GM12878 (cell line): ENCODE measurements at regions of chr13 and their contacts with region 1.

Region 1: DNA sequence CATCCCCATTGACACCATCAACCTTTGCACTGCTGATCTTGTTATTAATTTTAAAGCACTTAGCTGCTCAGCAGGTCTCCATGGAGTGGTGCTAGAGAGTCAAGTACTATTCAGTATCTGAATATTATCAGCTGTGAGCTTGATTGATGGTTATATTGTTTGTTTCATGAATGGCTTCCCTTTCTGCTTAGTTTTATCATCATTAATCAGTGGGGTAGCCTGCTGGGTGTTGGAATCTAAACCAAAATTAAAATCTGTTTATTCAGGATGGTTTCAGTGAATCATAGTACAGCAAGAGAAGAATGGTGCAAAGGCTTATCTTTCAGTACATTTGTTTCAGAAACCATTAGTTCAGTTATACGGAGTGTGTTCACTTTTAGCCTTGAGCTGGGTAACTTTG is 42.5 kb upstream of the SCEL start:
- DNase-seq: no peak
- ATAC-seq: peak; percentile 95
- H3K4me3 ChIP-seq: no peak overlapping the region
- H3K27ac ChIP-seq: no peak overlapping the region
- H3K4me1 ChIP-seq: peaks cover 8% of the 10 kb centered on the region; the same call in 1 of the 2 replicates
- H3K27me3 ChIP-seq: no peaks in the 10 kb centered on the region
- CTCF ChIP-seq: peak; percentile 68 to 81 (median 75); a peak in 5 of 6 replicates
- EP300 ChIP-seq: no peak
- POLR2A ChIP-seq: no peak
- RAD21 ChIP-seq: peak; percentile 88

Region 2: DNA sequence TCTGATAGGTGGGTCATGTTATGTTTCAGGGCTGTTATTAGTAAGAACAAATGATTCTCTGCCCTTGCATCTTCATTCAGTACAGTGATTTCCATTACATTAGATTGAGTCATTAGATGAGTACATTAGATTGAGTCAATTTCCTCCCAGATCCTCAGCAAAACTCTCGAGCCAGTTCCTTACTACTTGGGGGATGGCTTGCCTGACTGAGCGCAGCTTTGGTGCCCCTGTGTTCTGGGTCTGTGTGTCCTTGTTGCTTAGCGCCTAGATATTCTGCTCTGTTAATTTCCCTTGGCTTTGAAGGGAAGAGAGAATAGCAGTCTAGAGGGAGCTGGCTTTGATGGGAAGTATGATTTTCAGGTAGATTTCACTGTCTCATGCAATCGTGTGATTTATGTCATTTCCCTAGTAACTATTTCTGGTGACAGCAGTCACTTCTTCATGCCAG is 23.4 kb after region 1 on chr13:
- CTCF ChIA-PET with region 1: interaction called, 10 read pairs
- POLR2A ChIA-PET with region 1: interaction called, 4 read pairs
- RAD21 ChIA-PET with region 1: interaction called, 7 read pairs
- SMC1A ChIA-PET with region 1: interaction called, 9 read pairs
- in situ Hi-C with region 1: no loop called
- intact Hi-C with region 1: no loop called
- DNase-seq: no peak
- ATAC-seq: peak; percentile 57
- H3K4me3 ChIP-seq: no peak overlapping the region
- H3K27ac ChIP-seq: no peak overlapping the region
- H3K4me1 ChIP-seq: peaks cover 14% of the 10 kb centered on the region; the same call in 1 of the 2 replicates
- H3K27me3 ChIP-seq: no peaks in the 10 kb centered on the region
- CTCF ChIP-seq: no peak
- EP300 ChIP-seq: no peak
- POLR2A ChIP-seq: no peak
- RAD21 ChIP-seq: no peak

Region 3: DNA sequence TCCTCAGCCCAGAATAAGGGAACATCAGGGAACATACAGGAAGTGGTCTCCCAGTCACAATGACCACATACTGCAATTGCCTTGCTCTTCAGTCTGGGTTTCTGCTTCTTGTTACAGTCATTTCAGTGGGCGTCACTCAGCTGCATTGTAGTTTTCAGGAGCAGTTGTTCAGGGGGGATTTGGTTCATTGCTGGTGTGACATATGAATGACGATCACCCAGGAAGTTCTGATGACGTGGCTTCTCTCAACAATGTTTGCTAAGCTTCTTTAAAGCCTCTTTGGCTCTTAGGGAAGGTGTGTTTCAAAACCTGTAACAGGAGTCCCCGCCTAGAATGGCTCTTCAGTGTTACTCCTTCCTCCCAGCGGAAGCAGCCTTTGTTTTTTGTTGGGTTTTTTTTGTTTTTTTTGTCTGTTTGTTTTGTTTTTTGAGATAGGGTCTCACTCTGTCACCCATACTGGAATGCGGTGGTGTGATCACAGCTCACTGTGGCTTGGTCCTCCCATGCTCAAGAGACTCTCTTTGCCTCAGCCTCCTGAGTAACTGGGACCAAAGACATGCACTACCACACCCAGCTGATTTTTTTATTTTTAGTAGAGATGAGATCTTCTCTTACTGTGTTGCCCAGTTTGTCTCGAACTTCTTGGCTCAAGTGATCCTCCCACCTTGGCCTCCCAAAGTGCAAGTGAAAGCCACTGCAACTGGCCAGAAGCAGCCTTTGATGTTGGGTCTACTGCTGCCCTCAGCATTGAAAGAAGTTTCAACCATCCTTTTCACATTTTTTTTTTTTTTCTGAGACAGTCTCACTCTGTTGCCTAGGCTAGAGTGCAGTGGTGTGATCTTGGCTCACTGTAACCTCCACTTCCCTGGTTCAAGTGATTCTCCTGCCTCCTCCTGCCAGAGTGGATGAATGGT is 41.1 kb after region 1 on chr13:
- CTCF ChIA-PET with region 1: interaction called, 13 read pairs
- POLR2A ChIA-PET with region 1: no interaction called
- RAD21 ChIA-PET with region 1: interaction called, 9 read pairs
- SMC1A ChIA-PET with region 1: interaction called, 12 read pairs
- in situ Hi-C with region 1: no loop called
- intact Hi-C with region 1: no loop called
- DNase-seq: no peak
- ATAC-seq: peak; percentile 54
- H3K4me3 ChIP-seq: no peak overlapping the region
- H3K27ac ChIP-seq: no peak overlapping the region
- H3K4me1 ChIP-seq: 0 out of 2 replicates have a peak, but pooled peaks cover 2% of the 10 kb centered on the region
- H3K27me3 ChIP-seq: peaks cover 0 to 9% of the 10 kb centered on the region in 2 experiments; a peak in 1 of 4 replicates
- CTCF ChIP-seq: no peak
- EP300 ChIP-seq: no peak
- POLR2A ChIP-seq: no peak
- RAD21 ChIP-seq: no peak

Region 4: DNA sequence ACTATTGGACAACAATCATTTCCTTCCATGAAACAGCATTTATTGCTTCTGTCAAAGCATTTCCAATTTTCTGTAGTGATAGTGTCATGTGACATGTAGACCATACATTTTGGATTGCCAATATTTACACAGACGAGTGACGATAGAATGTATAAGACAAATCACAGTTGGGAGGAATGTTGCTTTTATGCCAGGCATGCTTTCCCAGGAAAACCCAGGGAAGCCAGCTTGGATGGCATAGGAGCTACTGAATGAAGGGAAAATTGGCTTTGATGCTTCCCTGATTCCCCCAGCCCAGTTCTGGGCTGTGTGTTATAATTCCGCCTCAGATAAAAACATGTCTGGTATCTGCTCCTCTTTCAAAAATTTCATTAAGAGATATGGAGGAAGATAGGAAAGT is 65.0 kb after region 1 on chr13:
- CTCF ChIA-PET with region 1: interaction called, 174 read pairs
- POLR2A ChIA-PET with region 1: no interaction called
- RAD21 ChIA-PET with region 1: interaction called, 75 read pairs
- SMC1A ChIA-PET with region 1: interaction called, 98 read pairs
- in situ Hi-C with region 1: loop called (anchors 5 kb)
- intact Hi-C with region 1: no loop called
- DNase-seq: no peak
- ATAC-seq: no peak
- H3K4me3 ChIP-seq: no peak overlapping the region
- H3K27ac ChIP-seq: no peak overlapping the region
- H3K4me1 ChIP-seq: peaks cover 15% of the 10 kb centered on the region
- H3K27me3 ChIP-seq: no peaks in the 10 kb centered on the region
- CTCF ChIP-seq: no peak
- EP300 ChIP-seq: no peak
- POLR2A ChIP-seq: no peak
- RAD21 ChIP-seq: no peak

Region 5: GRCh38 chr13:77574096-77574495 is 81.1 kb after region 1 on chr13:
- CTCF ChIA-PET with region 1: interaction called, 14 read pairs
- POLR2A ChIA-PET with region 1: no interaction called
- RAD21 ChIA-PET with region 1: interaction called, 5 read pairs
- SMC1A ChIA-PET with region 1: interaction called, 41 read pairs
- in situ Hi-C with region 1: no loop called
- intact Hi-C with region 1: no loop called
- DNase-seq: no peak
- ATAC-seq: no peak
- H3K4me3 ChIP-seq: no peak overlapping the region
- H3K27ac ChIP-seq: no peak overlapping the region
- H3K4me1 ChIP-seq: no peaks in the 10 kb centered on the region
- H3K27me3 ChIP-seq: no peaks in the 10 kb centered on the region; a peak in 1 of 4 replicates
- CTCF ChIP-seq: no peak
- EP300 ChIP-seq: no peak
- POLR2A ChIP-seq: no peak
- RAD21 ChIP-seq: no peak